Colonic mucosa (tissue), 4 donors: ENCODE measurements at regions of chrX and their contacts with region 1.

Region 1: DNA sequence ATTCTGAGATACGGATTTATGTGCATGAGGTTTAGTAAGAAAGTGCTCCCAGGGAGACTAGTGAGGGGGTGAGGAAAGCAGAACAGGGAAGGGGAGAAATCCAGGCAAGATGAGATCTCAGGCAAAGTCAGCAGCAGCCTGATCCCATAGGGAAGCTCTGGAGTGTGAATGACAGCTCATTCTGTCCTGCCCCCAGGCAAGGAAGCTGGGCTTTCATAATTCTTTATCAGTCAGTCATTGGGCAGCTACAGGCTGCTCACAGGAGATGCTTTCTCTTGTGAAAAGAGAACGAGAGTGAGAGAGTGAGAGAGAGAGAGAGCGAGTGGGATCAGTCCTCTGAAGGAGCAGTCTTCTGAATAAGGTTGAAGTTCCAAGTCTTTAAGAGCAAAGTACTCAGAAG is 48.1 kb downstream of the SRPX start:
- DNase-seq: no peak
- H3K4me3 ChIP-seq: no peak overlapping the region
- H3K27ac ChIP-seq: no peak overlapping the region
- H3K4me1 ChIP-seq: no peaks in the 10 kb centered on the region
- H3K27me3 ChIP-seq: no peaks in the 10 kb centered on the region
- CTCF ChIP-seq: no peak

Region 2: GRCh38 chrX:37755025-37755424 is 417.6 kb before region 1 on chrX:
- intact Hi-C with region 1: loop called (anchors 5 kb)
- DNase-seq: no peak
- H3K4me3 ChIP-seq: no peak overlapping the region
- H3K27ac ChIP-seq: no peak overlapping the region
- H3K4me1 ChIP-seq: no peaks in the 10 kb centered on the region
- H3K27me3 ChIP-seq: no peaks in the 10 kb centered on the region
- CTCF ChIP-seq: no peak